Ascending aorta (tissue), 2 donors: ENCODE measurements at regions of chr7 and their contacts with region 1.

Region 1: GRCh38 chr7:32891800-32892520 is 400 bp upstream of the KBTBD2 start:
- DNase-seq: peak; percentile 83 to 97
- H3K4me3 ChIP-seq: peak overlapping the region; percentile 96 to 100
- H3K27ac ChIP-seq: peak overlapping the region; percentile 98 to 100
- H3K4me1 ChIP-seq: peaks cover 2 to 26% of the 10 kb centered on the region in 2 donors
- H3K27me3 ChIP-seq: no peaks in the 10 kb centered on the region
- CTCF ChIP-seq: no peak

Region 2: GRCh38 chr7:32846701-32847100 is 45.3 kb before region 1 on chr7:
- intact Hi-C with region 1: loop called (anchors 2 kb)
- DNase-seq: peak; percentile 51 to 95
- H3K4me3 ChIP-seq: peak overlapping the region in 1 of 2 donors; percentile 19
- H3K27ac ChIP-seq: no peak overlapping the region
- H3K4me1 ChIP-seq: no peaks in the 10 kb centered on the region
- H3K27me3 ChIP-seq: no peaks in the 10 kb centered on the region
- CTCF ChIP-seq: peak; percentile 71 to 90 (median 87)

Region 3: DNA sequence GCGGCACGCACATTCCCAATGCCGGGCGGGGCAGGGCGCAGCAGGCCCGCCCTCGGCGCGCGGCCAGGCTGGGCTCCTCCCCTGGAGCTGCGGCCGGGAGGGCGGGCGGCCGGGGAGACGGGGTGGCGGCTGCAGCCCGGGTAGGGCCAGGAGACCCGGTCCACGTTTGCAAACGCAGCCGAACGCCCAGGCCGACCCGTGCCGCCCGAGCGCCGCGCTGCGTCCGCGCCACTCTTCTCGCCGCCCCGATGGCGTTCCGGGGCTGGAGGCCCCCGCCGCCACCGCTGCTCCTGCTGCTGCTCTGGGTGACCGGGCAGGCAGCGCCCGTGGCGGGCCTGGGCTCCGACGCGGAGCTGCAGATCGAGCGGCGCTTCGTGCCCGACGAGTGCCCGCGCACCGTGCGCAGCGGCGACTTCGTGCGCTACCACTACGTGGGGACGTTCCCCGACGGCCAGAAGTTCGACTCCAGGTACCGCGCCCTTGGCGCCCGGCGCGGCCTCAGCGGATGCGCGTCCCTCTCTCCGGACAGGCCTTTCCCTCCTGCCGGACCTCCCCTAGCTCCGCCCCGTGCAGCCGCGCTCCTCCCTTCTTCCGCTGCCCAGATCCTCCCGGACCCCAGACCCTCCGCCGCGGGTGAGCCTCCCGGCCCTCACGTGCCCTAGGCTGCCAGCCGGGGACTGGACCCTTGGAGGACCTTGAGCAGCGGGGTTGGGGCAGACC is 65.5 kb after region 1 on chr7 and contains the start of gene FKBP9:
- intact Hi-C with region 1: loop called (anchors 1 kb)
- DNase-seq: peak in 1 of 2 donors; percentile 84
- H3K4me3 ChIP-seq: peak within 1 kb of the TSS; percentile 72 to 97
- H3K27ac ChIP-seq: peak within 1 kb of the TSS; percentile 79 to 84
- H3K4me1 ChIP-seq: peaks cover 0 to 6% of the 10 kb centered on the region in 2 donors
- H3K27me3 ChIP-seq: no peaks in the 10 kb centered on the region
- CTCF ChIP-seq: no peak
- total RNA-seq, gene FKBP9: 302 TPM

Region 4: GRCh38 chr7:33109005-33109757 is 217.2 kb after region 1 on chr7 and contains the start of gene RP9:
- intact Hi-C with region 1: loop called (anchors 2 kb)
- DNase-seq: peak in 1 of 2 donors; percentile 75
- H3K4me3 ChIP-seq: peak within 1 kb of the TSS; percentile 96 to 100
- H3K27ac ChIP-seq: peak within 1 kb of the TSS in 1 of 2 donors; percentile 81
- H3K4me1 ChIP-seq: peaks cover 10 to 14% of the 10 kb centered on the region in 2 donors
- H3K27me3 ChIP-seq: no peaks in the 10 kb centered on the region
- CTCF ChIP-seq: peak; percentile 41 to 75 (median 57)
- total RNA-seq, gene RP9: 2.8 TPM

Region 5: DNA sequence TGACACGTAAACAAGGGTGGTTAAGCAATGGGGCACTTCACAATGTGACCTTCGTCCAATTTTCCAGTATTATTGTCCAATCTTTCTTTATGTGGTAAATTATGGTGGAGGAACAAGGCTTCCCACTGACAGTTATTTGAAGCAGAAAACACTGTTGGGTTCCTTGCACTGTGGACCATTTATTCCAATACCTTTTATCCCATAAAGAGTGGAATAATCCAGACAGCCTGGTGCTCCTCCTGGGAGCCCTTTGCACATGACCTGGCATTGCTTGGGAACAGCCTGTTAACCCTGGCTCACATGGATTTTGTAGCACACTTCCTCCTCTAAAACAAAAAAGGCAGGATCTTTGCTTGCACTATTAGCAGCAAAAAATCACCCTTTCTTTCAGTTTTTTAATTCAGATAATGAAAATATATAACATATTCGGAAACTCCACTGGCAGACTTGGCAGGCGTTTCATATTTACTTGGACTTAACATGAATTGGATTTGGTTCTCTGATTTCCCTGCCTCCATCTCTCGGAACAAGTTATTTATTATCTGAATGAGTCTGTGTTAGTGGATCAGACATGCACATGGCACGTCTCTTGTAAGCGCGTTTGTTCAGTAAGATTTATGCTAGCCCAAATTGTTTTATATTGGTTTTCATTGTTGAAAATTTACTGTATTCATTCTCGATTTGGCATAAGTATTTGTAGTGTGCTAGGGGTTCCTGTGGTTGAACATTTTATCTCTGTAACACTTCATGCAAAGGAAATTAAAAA is 1072.6 kb after region 1 on chr7:
- intact Hi-C with region 1: no loop called
- DNase-seq: no peak
- H3K4me3 ChIP-seq: no peak overlapping the region
- H3K27ac ChIP-seq: no peak overlapping the region
- H3K4me1 ChIP-seq: no peaks in the 10 kb centered on the region
- H3K27me3 ChIP-seq: no peaks in the 10 kb centered on the region
- CTCF ChIP-seq: no peak

Region 6: GRCh38 chr7:34158368-34159155 is 1266.6 kb after region 1 on chr7:
- intact Hi-C with region 1: loop called (anchors 10 kb)
- DNase-seq: peak in 1 of 2 donors; percentile 77
- H3K4me3 ChIP-seq: no peak overlapping the region
- H3K27ac ChIP-seq: peak overlapping the region; percentile 47 to 57
- H3K4me1 ChIP-seq: peaks cover 0 to 13% of the 10 kb centered on the region in 2 donors
- H3K27me3 ChIP-seq: no peaks in the 10 kb centered on the region
- CTCF ChIP-seq: no peak